ENCODE measurements at regions of chr10 and their contacts with region 1.

Region 1: GRCh38 chr10:112949875-112950507 is at the start of gene TCF7L2:
- DNase-seq: peak; percentile 96 to 99
- H3K4me3 ChIP-seq: peak within 1 kb of the TSS; percentile 87
- H3K4me3 Mint-ChIP-seq: peak within 1 kb of the TSS; percentile 90
- H3K27ac Mint-ChIP-seq: peak within 1 kb of the TSS; percentile 94
- H3K4me1 ChIP-seq: peaks cover 44% of the 10 kb centered on the region
- H3K4me1 Mint-ChIP-seq: peaks cover 33% of the 10 kb centered on the region
- H3K27me3 ChIP-seq: no peaks in the 10 kb centered on the region
- H3K27me3 Mint-ChIP-seq: no peaks in the 10 kb centered on the region
- CTCF ChIP-seq: no peak
- total RNA-seq, gene TCF7L2: 45.4 and 50.9 TPM in 2 replicates

Region 2: GRCh38 chr10:112728118-112728883 is 221.7 kb before region 1 on chr10:
- CTCF ChIA-PET with region 1: interaction called, 3 read pairs
- POLR2A ChIA-PET with region 1: interaction called, 9 read pairs
- intact Hi-C with region 1: loop called (anchors 2 kb)
- DNase-seq: peak; percentile 66 to 69
- H3K4me3 ChIP-seq: no peak overlapping the region
- H3K4me3 Mint-ChIP-seq: peak overlapping the region; percentile 50
- H3K27ac Mint-ChIP-seq: peak overlapping the region; percentile 94
- H3K4me1 ChIP-seq: peaks cover 78% of the 10 kb centered on the region
- H3K4me1 Mint-ChIP-seq: peaks cover 70% of the 10 kb centered on the region
- H3K27me3 ChIP-seq: no peaks in the 10 kb centered on the region
- H3K27me3 Mint-ChIP-seq: no peaks in the 10 kb centered on the region
- CTCF ChIP-seq: no peak

Region 3: GRCh38 chr10:112898540-112899395 is 51.2 kb before region 1 on chr10:
- CTCF ChIA-PET with region 1: no interaction called
- POLR2A ChIA-PET with region 1: no interaction called
- intact Hi-C with region 1: loop called (anchors 1 kb)
- DNase-seq: peak; percentile 83 to 92
- H3K4me3 ChIP-seq: peak overlapping the region; percentile 36
- H3K4me3 Mint-ChIP-seq: peak overlapping the region; percentile 84
- H3K27ac Mint-ChIP-seq: peak overlapping the region; percentile 88
- H3K4me1 ChIP-seq: peaks cover 20% of the 10 kb centered on the region
- H3K4me1 Mint-ChIP-seq: peaks cover 12% of the 10 kb centered on the region
- H3K27me3 ChIP-seq: no peaks in the 10 kb centered on the region
- H3K27me3 Mint-ChIP-seq: no peaks in the 10 kb centered on the region
- CTCF ChIP-seq: no peak

Region 4: DNA sequence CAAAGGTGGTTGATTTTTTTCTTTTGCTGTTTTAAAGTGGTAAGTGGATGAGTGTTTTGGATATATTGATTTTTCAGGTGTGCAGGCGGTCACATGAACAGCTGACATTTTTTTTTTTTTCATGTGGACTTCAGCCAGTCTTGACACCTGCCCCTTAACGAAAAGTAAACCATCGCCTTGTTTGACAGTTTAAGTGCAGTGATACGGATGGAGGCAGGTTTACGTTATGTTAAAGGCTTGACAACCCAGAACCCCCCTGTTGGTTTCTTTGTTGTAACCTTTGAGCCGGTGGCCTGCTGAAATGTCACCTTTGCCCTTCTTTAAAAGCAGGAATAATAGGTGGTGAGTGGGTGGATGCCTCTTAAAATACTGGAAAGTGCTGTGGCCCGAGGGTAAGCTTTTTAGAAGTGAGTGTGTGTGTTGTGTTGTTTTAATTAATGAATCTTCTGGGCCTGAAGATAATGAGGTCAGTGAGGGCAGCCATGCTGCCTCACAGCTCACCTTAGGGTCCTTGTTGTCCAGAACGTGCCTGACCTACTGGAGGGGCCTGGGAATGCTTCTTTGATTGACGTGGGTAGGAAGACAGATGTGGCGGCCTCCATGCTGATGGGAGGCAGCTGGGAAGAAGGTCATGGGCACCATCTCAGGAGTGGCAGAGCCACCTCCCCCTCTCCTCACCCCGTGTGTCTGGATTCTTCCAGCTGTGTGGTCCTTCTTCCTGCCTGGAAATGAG is 69.9 kb after region 1 on chr10:
- CTCF ChIA-PET with region 1: no interaction called
- POLR2A ChIA-PET with region 1: interaction called, 4 read pairs
- intact Hi-C with region 1: loop called (anchors 2 kb)
- DNase-seq: peak; percentile 74 to 78
- H3K4me3 ChIP-seq: 0 out of 2 replicates have a peak overlapping the region, but pooled peaks have one; percentile 5
- H3K4me3 Mint-ChIP-seq: peak overlapping the region; percentile 50
- H3K27ac Mint-ChIP-seq: peak overlapping the region; percentile 81
- H3K4me1 ChIP-seq: peaks cover 33% of the 10 kb centered on the region
- H3K4me1 Mint-ChIP-seq: peaks cover 34% of the 10 kb centered on the region
- H3K27me3 ChIP-seq: no peaks in the 10 kb centered on the region
- H3K27me3 Mint-ChIP-seq: no peaks in the 10 kb centered on the region
- CTCF ChIP-seq: no peak

Measured in Caco-2 (cell line).